Mammary epithelial cell (primary cell): ENCODE measurements at regions of chr1 and their contacts with region 1.

Region 1: GRCh38 chr1:216961516-216961915 is 238.3 kb upstream of the ESRRG start:
- DNase-seq: no peak
- H3K4me3 ChIP-seq: no peak overlapping the region
- H3K27ac ChIP-seq: no peak overlapping the region
- H3K4me1 ChIP-seq: no peaks in the 10 kb centered on the region
- H3K27me3 ChIP-seq: no peaks in the 10 kb centered on the region
- CTCF ChIP-seq: peak in 1 of 2 donors; percentile 24

Region 2: DNA sequence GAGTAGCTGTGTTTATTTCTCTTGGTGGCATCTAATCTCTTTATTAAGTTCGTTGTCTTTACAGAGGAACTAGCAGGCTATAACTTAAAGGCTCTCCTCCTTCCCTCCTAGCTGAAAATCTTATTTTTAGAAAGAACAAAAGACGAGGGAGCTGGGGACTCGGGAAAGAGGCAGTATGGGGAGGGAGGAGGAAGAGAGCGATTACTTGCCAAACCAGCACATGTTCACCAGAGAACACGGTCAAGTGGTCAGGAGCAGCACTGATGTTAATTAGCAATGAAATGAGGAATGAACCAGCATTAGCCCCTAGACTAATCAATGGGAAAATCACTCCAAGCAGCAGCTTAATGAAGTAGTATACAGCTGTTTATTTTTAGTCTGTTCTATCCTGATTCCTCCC is 67.0 kb before region 1 on chr1:
- CTCF ChIA-PET with region 1: no interaction called
- dilution Hi-C with region 1: loop called (anchors 5 kb)
- in situ Hi-C with region 1: no loop called
- intact Hi-C with region 1: no loop called
- DNase-seq: no peak
- H3K4me3 ChIP-seq: no peak overlapping the region
- H3K27ac ChIP-seq: no peak overlapping the region
- H3K4me1 ChIP-seq: peaks cover 10% of the 10 kb centered on the region
- H3K27me3 ChIP-seq: no peaks in the 10 kb centered on the region
- CTCF ChIP-seq: no peak

Region 3: DNA sequence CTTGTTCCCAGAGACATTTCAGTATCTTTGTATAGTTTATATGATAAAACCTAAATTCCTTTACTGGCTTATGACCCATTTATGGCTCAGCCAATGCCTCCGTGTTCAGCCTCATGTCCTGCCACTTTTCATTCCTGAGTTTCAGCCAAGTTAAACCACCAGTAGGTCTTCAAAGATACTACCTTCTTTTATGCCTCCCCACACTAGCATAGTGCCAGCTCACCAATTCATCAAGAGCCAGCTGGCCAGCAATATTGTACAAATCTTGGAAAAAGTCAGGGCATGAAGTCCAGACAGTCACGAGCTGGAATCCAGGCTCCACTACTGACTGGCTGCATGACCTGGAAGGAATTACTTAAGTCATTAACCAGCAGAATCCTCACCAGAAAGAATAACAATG is 223.3 kb after region 1 on chr1:
- CTCF ChIA-PET with region 1: no interaction called
- dilution Hi-C with region 1: no loop called
- in situ Hi-C with region 1: no loop called
- intact Hi-C with region 1: no loop called
- DNase-seq: no peak
- H3K4me3 ChIP-seq: no peak overlapping the region
- H3K27ac ChIP-seq: no peak overlapping the region
- H3K4me1 ChIP-seq: no peaks in the 10 kb centered on the region
- H3K27me3 ChIP-seq: peaks cover 1% of the 10 kb centered on the region
- CTCF ChIP-seq: no peak